Stomach (tissue), 19 donors: ENCODE measurements at regions of chr18 and their contacts with region 1.

Region 1: DNA sequence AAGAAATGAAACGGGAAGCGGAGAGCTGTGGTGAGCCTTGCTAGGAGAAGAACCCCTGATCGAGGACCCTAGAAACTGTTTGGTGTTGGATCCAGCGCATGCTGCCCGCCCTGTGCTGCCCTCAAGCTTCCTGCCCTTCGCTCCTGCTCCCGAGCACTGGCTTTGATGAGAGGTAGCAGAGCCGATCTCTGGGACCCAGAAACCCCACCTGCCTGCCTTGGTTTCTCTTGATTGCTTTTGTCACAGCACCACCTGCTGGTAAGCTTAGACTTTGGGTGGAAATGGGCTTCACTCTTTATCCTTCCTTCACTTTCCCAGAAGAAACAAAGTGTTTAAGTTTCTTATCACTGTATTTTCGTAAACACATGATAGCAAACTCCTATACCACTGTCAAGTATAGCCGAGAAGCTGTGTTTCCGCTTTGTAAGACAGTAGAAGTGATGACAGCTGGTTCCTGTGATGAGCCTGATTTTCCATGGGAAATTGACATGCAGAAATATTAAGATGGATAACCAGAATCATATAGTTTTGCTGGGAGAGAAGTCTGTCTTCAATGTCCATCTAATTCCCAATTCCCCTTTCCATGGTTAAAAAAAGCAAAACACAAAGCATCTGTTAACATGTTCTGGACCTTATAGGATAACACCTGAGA is 267.4 kb downstream of the PHLPP1 start:
- DNase-seq: peak; percentile 64 to 89
- H3K4me3 ChIP-seq: peak overlapping the region; percentile 28 to 38 (median 32)
- H3K27ac ChIP-seq: peak overlapping the region in 1 of 5 donors; percentile 37
- H3K4me1 ChIP-seq: peaks cover 0 to 26% (median 8%) of the 10 kb centered on the region in 4 donors
- H3K27me3 ChIP-seq: no peaks in the 10 kb centered on the region
- CTCF ChIP-seq: peak in 5 of 7 experiments; percentile 63 to 84 (median 74)
- EP300 ChIP-seq: no peak
- POLR2A ChIP-seq: no peak

Region 2: GRCh38 chr18:62584241-62585120 is 398.2 kb before region 1 on chr18:
- intact Hi-C with region 1: loop called (anchors 10 kb)
- DNase-seq: peak; percentile 83 to 96
- H3K4me3 ChIP-seq: peak overlapping the region in 1 of 4 donors; percentile 5
- H3K27ac ChIP-seq: peak overlapping the region in 3 of 5 donors; percentile 16 to 59 (median 21)
- H3K4me1 ChIP-seq: peaks cover 11 to 25% (median 18%) of the 10 kb centered on the region in 4 donors
- H3K27me3 ChIP-seq: no peaks in the 10 kb centered on the region
- CTCF ChIP-seq: peak in 6 of 7 experiments; percentile 42 to 99 (median 96)
- EP300 ChIP-seq: no peak
- POLR2A ChIP-seq: no peak

Region 3: DNA sequence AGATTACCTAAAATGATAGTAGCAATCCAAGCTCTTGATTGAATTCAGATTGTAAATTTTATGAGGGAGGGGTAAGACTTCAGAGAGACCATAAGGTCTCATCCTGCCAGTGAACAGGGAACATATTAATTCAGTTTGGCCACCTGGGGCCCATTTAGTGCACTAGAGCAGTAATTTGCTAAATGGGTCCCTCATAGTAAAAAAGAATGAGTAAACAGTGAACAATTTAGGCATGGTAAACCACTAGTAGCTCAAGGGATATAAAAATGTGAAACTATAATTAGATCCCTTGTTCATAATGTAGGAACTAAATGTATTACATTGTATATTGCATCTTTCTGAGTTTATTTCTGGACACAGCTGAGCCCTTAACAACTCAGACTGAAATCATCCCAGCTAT is 272.3 kb before region 1 on chr18:
- intact Hi-C with region 1: loop called (anchors 5 kb)
- DNase-seq: no peak
- H3K4me3 ChIP-seq: no peak overlapping the region
- H3K27ac ChIP-seq: no peak overlapping the region
- H3K4me1 ChIP-seq: peaks cover 0 to 6% (median 3%) of the 10 kb centered on the region in 4 donors
- H3K27me3 ChIP-seq: no peaks in the 10 kb centered on the region
- CTCF ChIP-seq: no peak
- EP300 ChIP-seq: no peak
- POLR2A ChIP-seq: no peak

Region 4: GRCh38 chr18:63040788-63041410 is 58.2 kb after region 1 on chr18:
- intact Hi-C with region 1: no loop called
- DNase-seq: no peak
- H3K4me3 ChIP-seq: no peak overlapping the region
- H3K27ac ChIP-seq: no peak overlapping the region
- H3K4me1 ChIP-seq: no peaks in the 10 kb centered on the region
- H3K27me3 ChIP-seq: peaks cover 0 to under 1% (median 0%) of the 10 kb centered on the region in 3 donors
- CTCF ChIP-seq: no peak
- EP300 ChIP-seq: no peak
- POLR2A ChIP-seq: no peak